Mammary epithelial cell (primary cell): ENCODE measurements at regions of chr11 and their contacts with region 1.

Region 1: DNA sequence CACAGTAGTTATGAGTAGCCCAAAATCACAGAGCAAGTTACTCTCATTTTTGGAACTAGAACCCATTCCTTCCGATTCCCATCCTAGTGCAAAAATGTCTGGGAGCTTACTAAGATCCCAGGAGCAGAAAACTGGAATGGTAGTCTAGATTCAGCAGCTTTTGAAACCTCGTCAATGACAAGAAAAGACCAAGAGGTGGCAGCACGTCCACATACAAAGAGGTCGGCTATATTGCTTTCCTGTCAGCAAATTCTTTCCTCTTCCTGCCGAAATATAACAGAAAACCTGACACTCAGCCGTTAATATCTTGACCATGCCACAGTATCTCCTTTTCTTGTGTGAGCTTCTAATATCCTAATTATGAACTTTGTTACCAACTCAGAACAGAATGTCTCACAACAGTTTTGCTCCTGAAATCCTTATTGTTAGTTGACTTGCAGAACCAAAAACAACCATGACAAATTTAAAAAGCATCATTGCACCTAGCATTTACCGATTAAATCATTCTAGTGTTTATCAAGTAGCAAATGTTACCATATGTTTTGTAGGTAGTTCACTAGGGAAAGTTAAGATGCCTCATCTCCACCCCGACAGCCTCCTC is 92.8 kb upstream of the OR9G4 start:
- DNase-seq: peak; percentile 57
- H3K4me3 ChIP-seq: no peak overlapping the region
- H3K27ac ChIP-seq: no peak overlapping the region
- H3K4me1 ChIP-seq: peaks cover 16% of the 10 kb centered on the region
- H3K27me3 ChIP-seq: no peaks in the 10 kb centered on the region
- CTCF ChIP-seq: peak; percentile 72 to 75

Region 2: GRCh38 chr11:56314844-56315243 is 526.5 kb before region 1 on chr11 and contains the start of gene OR8K3:
- CTCF ChIA-PET with region 1: no interaction called
- dilution Hi-C with region 1: no loop called
- in situ Hi-C with region 1: no loop called
- intact Hi-C with region 1: no loop called
- DNase-seq: no peak
- H3K4me3 ChIP-seq: no peak within 1 kb of the TSS
- H3K27ac ChIP-seq: no peak within 1 kb of the TSS
- H3K4me1 ChIP-seq: no peaks in the 10 kb centered on the region
- H3K27me3 ChIP-seq: no peaks in the 10 kb centered on the region
- CTCF ChIP-seq: no peak
- total RNA-seq, gene OR8K3: not detected

Region 3: GRCh38 chr11:56932572-56933220 is 91.4 kb after region 1 on chr11:
- CTCF ChIA-PET with region 1: interaction called, 4 read pairs
- dilution Hi-C with region 1: loop called (anchors 5 kb)
- in situ Hi-C with region 1: no loop called
- intact Hi-C with region 1: loop called (anchors 5 kb)
- DNase-seq: peak; percentile 97
- H3K4me3 ChIP-seq: no peak overlapping the region
- H3K27ac ChIP-seq: peak overlapping the region; percentile 48
- H3K4me1 ChIP-seq: peaks cover 15% of the 10 kb centered on the region
- H3K27me3 ChIP-seq: no peaks in the 10 kb centered on the region
- CTCF ChIP-seq: no peak

Region 4: GRCh38 chr11:57055764-57056163 is 214.5 kb after region 1 on chr11:
- CTCF ChIA-PET with region 1: no interaction called
- dilution Hi-C with region 1: loop called (anchors 10 kb)
- in situ Hi-C with region 1: no loop called
- intact Hi-C with region 1: no loop called
- DNase-seq: no peak
- H3K4me3 ChIP-seq: no peak overlapping the region
- H3K27ac ChIP-seq: no peak overlapping the region
- H3K4me1 ChIP-seq: no peaks in the 10 kb centered on the region
- H3K27me3 ChIP-seq: no peaks in the 10 kb centered on the region
- CTCF ChIP-seq: no peak

Region 5: DNA sequence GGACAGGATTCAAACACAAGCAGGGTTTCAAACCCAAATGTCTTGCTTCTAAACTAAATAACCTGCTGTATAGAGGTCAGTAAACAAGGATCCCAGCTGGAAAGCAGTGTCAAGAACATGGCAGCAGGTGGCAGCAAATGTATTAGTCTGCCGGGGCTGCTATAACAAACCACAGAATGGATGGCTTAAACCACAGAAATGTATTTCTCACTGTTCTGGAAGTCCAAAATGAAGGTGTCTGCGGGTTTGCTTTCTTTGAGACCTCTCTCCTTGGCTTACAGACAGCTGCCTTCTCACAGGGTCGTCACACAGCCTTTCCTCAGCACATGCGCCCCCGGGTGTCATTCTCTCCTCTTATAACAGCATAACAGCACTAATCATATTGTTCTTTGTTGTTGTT is 275.3 kb after region 1 on chr11:
- CTCF ChIA-PET with region 1: no interaction called
- dilution Hi-C with region 1: loop called (anchors 10 kb)
- in situ Hi-C with region 1: loop called in 1 of 2 experiments (anchors 25 kb)
- intact Hi-C with region 1: loop called (anchors 1 kb)
- DNase-seq: peak; percentile 66
- H3K4me3 ChIP-seq: no peak overlapping the region
- H3K27ac ChIP-seq: no peak overlapping the region
- H3K4me1 ChIP-seq: no peaks in the 10 kb centered on the region
- H3K27me3 ChIP-seq: no peaks in the 10 kb centered on the region
- CTCF ChIP-seq: peak; percentile 58 to 62

Region 6: GRCh38 chr11:57249384-57250319 is 408.3 kb after region 1 on chr11:
- CTCF ChIA-PET with region 1: interaction called, 51 read pairs
- dilution Hi-C with region 1: no loop called
- in situ Hi-C with region 1: loop called (anchors 5 kb)
- intact Hi-C with region 1: loop called (anchors 1 kb)
- DNase-seq: peak; percentile 70
- H3K4me3 ChIP-seq: no peak overlapping the region
- H3K27ac ChIP-seq: no peak overlapping the region
- H3K4me1 ChIP-seq: peaks cover 27% of the 10 kb centered on the region
- H3K27me3 ChIP-seq: no peaks in the 10 kb centered on the region
- CTCF ChIP-seq: peak; percentile 89 to 92

Region 7: DNA sequence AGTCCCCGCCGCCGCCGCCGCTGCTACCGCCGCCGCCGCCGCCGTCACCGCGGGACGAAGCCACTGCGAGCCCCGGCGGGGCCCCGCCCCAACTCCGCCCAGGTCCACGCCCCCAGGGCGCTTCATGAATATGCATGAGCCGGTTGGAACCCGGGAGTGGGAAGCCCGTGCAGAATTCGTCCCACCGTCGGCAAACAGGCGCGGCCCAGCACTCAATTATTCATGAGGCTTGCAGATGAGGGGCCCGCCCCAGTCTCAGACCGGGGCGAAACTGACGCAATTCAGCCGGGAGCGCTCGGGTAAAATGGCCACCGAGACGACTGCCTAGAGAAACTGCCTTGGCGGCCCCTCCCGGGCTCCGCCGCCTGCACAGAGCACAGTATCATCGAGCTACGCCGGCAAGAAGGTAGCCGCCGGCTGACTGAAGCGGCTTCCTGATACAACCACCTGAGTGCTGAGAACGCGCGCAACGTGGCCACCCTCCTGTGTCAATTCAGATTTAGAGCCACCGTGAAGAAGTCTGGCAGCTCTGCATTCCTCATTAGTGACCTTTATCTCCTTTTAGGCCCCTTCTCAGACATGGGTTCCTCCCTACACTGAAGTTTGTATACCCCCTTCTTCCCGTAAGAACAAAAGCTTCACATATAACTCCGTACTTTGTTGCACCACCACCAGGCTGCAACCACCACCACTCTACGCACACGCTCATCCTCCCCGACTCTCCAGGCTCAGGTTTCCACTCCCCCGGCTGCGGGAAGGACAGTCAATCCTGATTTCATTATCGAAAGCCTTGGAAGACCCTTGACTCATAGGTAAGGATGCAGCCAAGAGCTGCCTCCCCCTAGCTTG is 483.8 kb after region 1 on chr11 and contains the start of gene TNKS1BP1:
- CTCF ChIA-PET with region 1: no interaction called
- dilution Hi-C with region 1: loop called (anchors 10 kb)
- in situ Hi-C with region 1: no loop called
- intact Hi-C with region 1: loop called (anchors 5 kb)
- DNase-seq: peak; percentile 97
- H3K4me3 ChIP-seq: peak within 1 kb of the TSS; percentile 82 to 90 (median 90)
- H3K27ac ChIP-seq: peak within 1 kb of the TSS; percentile 96
- H3K4me1 ChIP-seq: peaks cover 50% of the 10 kb centered on the region
- H3K27me3 ChIP-seq: no peaks in the 10 kb centered on the region
- CTCF ChIP-seq: no peak
- total RNA-seq, gene TNKS1BP1: 195 to 208 TPM